PC-9 (cell line): ENCODE measurements at regions of chr6 and their contacts with region 1.

Region 1: DNA sequence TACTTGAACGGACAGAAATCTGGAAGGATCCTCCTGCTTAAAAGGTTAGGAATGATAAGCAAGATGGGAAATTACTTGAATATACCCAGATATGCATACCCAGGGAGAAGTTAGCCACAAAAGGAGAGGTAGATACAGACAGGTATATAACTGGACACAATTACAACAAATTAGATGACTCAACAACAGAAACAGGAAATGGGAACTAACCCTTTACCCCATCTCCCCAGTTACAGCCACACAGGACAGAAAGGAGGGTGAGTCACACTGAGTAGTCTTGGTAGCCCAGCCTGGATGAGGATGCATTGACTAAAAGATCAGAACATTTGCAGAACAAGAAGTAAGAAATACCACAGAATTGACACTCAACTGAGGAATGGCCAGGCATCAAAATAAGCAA is 61.2 kb downstream of the C6orf52 start:
- DNase-seq: peak; percentile 50 to 88
- H3K4me3 ChIP-seq: no peak overlapping the region
- H3K27ac ChIP-seq: peak overlapping the region; percentile 81
- H3K4me1 ChIP-seq: peaks cover 13% of the 10 kb centered on the region
- H3K27me3 ChIP-seq: no peaks in the 10 kb centered on the region
- CTCF ChIP-seq: no peak

Region 2: DNA sequence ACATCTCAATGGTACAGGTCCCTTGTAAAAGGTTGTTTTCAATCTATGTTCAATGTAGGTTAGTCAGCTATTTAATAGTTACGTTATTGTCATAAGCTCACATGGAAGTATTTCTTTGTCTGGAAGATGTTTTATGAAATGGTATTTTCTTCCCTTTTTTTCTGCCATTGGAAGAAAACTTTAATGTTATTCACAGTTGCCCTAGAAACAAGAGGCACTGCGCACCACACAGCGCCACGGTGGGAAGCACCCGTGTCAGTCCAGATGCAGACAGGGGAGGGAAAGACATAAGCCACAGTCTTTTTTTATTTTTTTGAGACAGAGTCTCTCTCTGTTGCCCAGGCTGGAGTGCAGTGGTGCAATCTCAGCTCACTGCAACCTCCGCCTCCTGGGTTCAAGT is 30.0 kb before region 1 on chr6:
- CTCF ChIA-PET with region 1: interaction called, 21 read pairs
- POLR2A ChIA-PET with region 1: no interaction called
- intact Hi-C with region 1: no loop called
- DNase-seq: no peak
- H3K4me3 ChIP-seq: no peak overlapping the region
- H3K27ac ChIP-seq: no peak overlapping the region
- H3K4me1 ChIP-seq: no peaks in the 10 kb centered on the region
- H3K27me3 ChIP-seq: no peaks in the 10 kb centered on the region
- CTCF ChIP-seq: no peak